ENCODE measurements at regions of chr16 and their contacts with region 1.

Region 1: GRCh38 chr16:30775392-30776188 is 11.4 kb downstream of the ZNF629 start:
- DNase-seq: peak; percentile 84 to 89
- ATAC-seq: peak; percentile 82 to 92 (median 90)
- H3K4me3 ChIP-seq: peak overlapping the region; percentile 52 to 86 (median 78)
- H3K27ac ChIP-seq: peak overlapping the region; percentile 83 to 97 (median 93)
- H3K4me1 ChIP-seq: peaks cover 9 to 46% (median 30%) of the 10 kb centered on the region in 9 donors
- H3K27me3 ChIP-seq: no peaks in the 10 kb centered on the region
- CTCF ChIP-seq: no peak

Region 2: GRCh38 chr16:30813821-30814189 is 38.2 kb after region 1 on chr16:
- intact Hi-C with region 1: loop called in 1 of 10 experiments (anchors 5 kb)
- DNase-seq: no peak
- ATAC-seq: peak in 7 of 8 donors; percentile 11 to 45 (median 25)
- H3K4me3 ChIP-seq: peak overlapping the region; percentile 27 to 59 (median 52)
- H3K27ac ChIP-seq: peak overlapping the region; percentile 16 to 93 (median 78)
- H3K4me1 ChIP-seq: peaks cover 0 to 24% (median 8%) of the 10 kb centered on the region in 9 donors
- H3K27me3 ChIP-seq: no peaks in the 10 kb centered on the region
- CTCF ChIP-seq: no peak

Region 3: GRCh38 chr16:31052124-31052523 is 276.5 kb after region 1 on chr16:
- intact Hi-C with region 1: no loop called
- DNase-seq: no peak
- ATAC-seq: peak in 1 of 8 donors; percentile 86
- H3K4me3 ChIP-seq: no peak overlapping the region
- H3K27ac ChIP-seq: peak overlapping the region in 1 of 10 donors; percentile 59
- H3K4me1 ChIP-seq: peaks cover 0 to 17% (median 0%) of the 10 kb centered on the region in 9 donors
- H3K27me3 ChIP-seq: no peaks in the 10 kb centered on the region
- CTCF ChIP-seq: no peak

Measured in heart right ventricle (tissue), 16 donors.